ENCODE measurements at regions of chr11 and their contacts with region 1.

Region 1: GRCh38 chr11:10366568-10367370 is 61.9 kb downstream of the ADM start:
- DNase-seq: peak; percentile 82 to 91 (median 86)
- H3K4me3 ChIP-seq: no peak overlapping the region
- H3K27ac ChIP-seq: no peak overlapping the region
- H3K4me1 ChIP-seq: peaks cover 4% of the 10 kb centered on the region
- H3K27me3 ChIP-seq: no peaks in the 10 kb centered on the region
- CTCF ChIP-seq: peak; percentile 69 to 78 (median 76)
- EP300 ChIP-seq: no peak
- POLR2A ChIP-seq: no peak

Region 2: DNA sequence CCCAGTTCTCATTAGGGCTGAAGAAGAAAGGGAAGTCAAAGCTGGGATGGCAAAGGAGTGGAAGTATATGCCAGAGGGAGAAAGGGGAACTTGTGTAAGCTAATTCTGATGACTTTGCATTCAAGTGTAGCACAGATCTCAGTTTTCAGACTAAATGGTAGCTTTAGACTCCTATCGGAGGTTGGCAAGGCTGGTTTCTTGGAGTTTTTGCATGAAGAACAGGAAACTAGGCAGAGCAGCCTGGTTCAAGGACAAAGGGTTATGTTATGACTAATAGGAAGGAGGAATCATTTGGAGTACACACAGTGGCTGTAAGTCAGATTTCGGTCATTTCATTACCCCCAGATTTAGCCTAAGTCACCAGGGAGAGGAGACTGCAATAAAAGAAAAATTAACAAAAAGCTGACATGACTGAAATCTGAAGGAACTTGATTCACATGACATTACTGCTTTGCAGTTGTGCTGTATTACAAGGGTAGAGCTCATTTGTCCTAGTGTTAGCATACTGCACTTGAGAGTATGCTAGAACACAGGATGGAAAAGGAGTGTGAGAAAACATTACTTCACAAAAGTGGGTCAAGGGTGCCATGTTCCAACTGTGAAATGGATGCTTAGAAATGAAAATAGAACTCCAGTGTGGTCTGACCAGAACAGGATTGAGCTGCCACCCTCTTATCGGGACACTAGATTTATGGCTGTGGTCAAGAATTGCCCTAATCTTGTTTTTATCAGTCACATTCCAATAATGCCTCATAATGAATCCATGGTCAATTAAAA is 38.3 kb before region 1 on chr11:
- intact Hi-C with region 1: loop called in 1 of 4 experiments (anchors 5 kb)
- DNase-seq: no peak
- H3K4me3 ChIP-seq: no peak overlapping the region
- H3K27ac ChIP-seq: peak overlapping the region in 1 of 2 donors; percentile 50
- H3K4me1 ChIP-seq: peaks cover 33% of the 10 kb centered on the region
- H3K27me3 ChIP-seq: no peaks in the 10 kb centered on the region
- CTCF ChIP-seq: no peak
- EP300 ChIP-seq: no peak
- POLR2A ChIP-seq: no peak

Measured in ovary (tissue), 10 donors.